Endothelial cell of umbilical vein (primary cell): ENCODE measurements at regions of chr7 and their contacts with region 1.

Region 1: DNA sequence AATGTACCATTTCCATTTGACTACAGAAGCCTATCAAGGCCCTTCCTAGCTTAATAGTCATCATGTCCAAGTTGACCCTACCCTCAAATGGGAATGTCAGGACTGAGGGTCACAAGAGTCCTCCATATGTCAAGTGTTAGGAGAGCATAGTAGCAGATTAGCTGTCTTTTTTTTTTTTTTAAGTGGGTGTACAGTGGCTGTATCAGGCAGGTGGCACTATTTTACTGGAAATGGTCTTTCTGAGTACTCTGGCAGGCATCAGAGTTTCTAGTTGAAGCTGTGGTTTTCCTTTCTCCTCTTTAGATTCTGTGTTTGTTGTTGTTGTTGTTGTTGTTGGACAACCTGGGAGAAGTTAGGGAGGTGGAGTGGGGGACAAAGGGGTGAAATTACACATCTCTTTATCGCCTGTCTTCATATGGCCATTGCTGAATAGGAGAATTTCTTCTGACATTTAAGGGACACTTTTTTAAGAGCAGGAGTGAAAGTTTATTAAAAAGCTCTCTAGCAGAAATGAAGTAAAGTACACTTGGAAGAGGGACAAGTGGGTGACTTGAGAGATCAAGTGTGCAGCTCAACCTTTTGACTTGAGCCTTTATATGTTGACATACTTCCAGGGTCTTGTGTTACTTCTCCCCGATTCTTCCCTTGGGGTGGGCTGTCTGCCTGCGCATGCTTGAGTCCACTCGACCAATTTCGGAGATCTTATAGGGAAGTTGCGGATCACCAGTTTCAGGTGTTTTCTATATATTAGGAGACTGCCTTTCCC is 104.1 kb upstream of the FOXP2 start:
- DNase-seq: no peak
- H3K4me3 ChIP-seq: no peak overlapping the region
- H3K27ac ChIP-seq: no peak overlapping the region
- H3K4me1 ChIP-seq: no peaks in the 10 kb centered on the region
- H3K27me3 ChIP-seq: no peaks in the 10 kb centered on the region
- CTCF ChIP-seq: no peak
- POLR2A ChIP-seq: no peak

Region 2: DNA sequence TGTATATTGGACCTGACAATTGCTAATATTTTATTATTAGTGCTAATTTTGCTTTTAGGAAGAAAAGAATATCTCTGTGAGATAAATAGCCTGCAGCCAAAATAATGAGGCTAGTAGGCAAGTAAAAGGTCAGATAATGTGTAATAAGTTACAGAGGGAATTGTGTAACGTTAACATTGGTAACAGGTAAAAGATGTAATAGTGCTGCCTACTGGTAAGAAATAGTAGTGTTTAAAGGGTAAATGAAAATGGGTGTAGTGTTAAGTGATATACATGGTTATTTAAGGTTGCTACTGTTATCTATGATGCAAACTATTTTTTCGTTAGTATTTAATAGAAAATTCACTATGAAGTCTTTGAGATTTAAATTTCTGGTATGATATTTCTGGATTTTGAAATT is 94.9 kb after region 1 on chr7:
- CTCF ChIA-PET with region 1: interaction called, 8 read pairs
- POLR2A ChIA-PET with region 1: no interaction called
- dilution Hi-C with region 1: no loop called
- intact Hi-C with region 1: loop called (anchors 1 kb)
- DNase-seq: no peak
- H3K4me3 ChIP-seq: no peak overlapping the region
- H3K27ac ChIP-seq: no peak overlapping the region
- H3K4me1 ChIP-seq: no peaks in the 10 kb centered on the region
- H3K27me3 ChIP-seq: no peaks in the 10 kb centered on the region
- CTCF ChIP-seq: peak in 1 of 2 donors; percentile 3
- POLR2A ChIP-seq: no peak